ENCODE measurements at regions of chr7 and their contacts with region 1.

Region 1: DNA sequence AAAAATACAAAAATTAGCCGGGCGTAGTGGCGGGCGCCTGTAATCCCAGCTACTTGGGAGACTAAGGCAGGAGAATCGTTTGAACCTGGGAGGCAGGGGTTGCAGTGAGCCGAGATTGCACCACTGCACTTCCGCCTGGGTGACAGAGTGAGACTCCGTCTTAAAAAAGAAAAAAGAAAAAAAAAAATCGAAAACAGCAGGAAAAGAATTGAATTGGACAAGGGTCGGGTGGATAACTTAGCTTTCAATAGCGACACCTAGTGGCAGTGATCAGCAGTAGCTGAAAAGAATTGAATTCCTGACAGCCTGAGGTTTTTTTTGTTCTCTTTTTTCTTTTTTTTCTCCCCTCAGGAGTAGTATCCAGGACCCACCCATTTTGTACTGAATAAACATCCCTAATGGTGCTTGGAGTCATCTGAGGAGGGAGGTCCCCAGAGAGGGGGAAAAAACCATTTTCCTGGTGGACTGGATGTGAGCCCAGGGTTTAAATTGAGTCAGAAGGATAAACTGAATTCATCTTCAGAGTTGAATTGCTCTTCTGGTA is 55.1 kb downstream of the CYCS start:
- DNase-seq: no peak

Region 2: GRCh38 chr7:25054819-25055519 is 15.0 kb before region 1 on chr7:
- intact Hi-C with region 1: loop called in 1 of 2 experiments (anchors 1 kb)
- DNase-seq: no peak

Region 3: DNA sequence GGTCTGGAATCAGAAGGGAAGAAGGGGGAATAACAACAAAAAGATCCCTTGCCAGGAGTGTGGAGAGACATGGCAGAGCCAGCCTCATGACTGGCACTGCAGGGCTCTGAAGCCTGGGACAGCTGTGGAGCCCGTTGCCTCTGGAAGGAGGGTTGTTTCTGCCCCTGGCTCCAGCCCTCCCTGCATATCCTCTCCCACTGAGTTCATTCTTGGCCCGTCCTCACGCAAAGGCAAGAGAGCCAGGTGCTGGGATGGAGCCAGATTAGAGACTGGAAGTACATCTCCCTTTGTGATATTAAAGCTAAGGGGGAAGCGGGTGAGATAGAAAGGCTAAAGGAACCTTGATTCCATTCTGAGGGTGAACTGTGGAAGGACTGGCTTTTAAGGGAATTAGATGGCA is 299.8 kb after region 1 on chr7:
- intact Hi-C with region 1: no loop called
- DNase-seq: peak; percentile 85